ENCODE measurements at regions of chr5 and their contacts with region 1.

Region 1: GRCh38 chr5:80481019-80481893 is 6.6 kb upstream of the FAM151B start:
- DNase-seq: peak; percentile 82
- H3K4me3 Mint-ChIP-seq: no peak overlapping the region
- H3K27ac Mint-ChIP-seq: no peak overlapping the region
- H3K4me1 Mint-ChIP-seq: peaks cover 2% of the 10 kb centered on the region
- H3K27me3 Mint-ChIP-seq: peaks cover under 1% of the 10 kb centered on the region

Region 2: GRCh38 chr5:81194633-81195333 is 713.5 kb after region 1 on chr5:
- intact Hi-C with region 1: loop called (anchors 1 kb)
- DNase-seq: peak; percentile 94
- H3K4me3 Mint-ChIP-seq: peak overlapping the region; percentile 24
- H3K27ac Mint-ChIP-seq: no peak overlapping the region
- H3K4me1 Mint-ChIP-seq: peaks cover 4% of the 10 kb centered on the region
- H3K27me3 Mint-ChIP-seq: no peaks in the 10 kb centered on the region

Measured in activated CD4-positive, alpha-beta T cell treated with anti-CD3 and anti-CD28 coated beads, Interleukin-2, amount 10 ng/mL, durations not matched to agents 24 days and 14 days (primary cell).